Activated CD4-positive, alpha-beta memory T cell treated with anti-CD3 and anti-CD28 coated beads, Interleukin-2, amount 10 ng/mL, durations not matched to agents 7 days and 5 days (primary cell): ENCODE measurements at regions of chr3 and their contacts with region 1.

Region 1: DNA sequence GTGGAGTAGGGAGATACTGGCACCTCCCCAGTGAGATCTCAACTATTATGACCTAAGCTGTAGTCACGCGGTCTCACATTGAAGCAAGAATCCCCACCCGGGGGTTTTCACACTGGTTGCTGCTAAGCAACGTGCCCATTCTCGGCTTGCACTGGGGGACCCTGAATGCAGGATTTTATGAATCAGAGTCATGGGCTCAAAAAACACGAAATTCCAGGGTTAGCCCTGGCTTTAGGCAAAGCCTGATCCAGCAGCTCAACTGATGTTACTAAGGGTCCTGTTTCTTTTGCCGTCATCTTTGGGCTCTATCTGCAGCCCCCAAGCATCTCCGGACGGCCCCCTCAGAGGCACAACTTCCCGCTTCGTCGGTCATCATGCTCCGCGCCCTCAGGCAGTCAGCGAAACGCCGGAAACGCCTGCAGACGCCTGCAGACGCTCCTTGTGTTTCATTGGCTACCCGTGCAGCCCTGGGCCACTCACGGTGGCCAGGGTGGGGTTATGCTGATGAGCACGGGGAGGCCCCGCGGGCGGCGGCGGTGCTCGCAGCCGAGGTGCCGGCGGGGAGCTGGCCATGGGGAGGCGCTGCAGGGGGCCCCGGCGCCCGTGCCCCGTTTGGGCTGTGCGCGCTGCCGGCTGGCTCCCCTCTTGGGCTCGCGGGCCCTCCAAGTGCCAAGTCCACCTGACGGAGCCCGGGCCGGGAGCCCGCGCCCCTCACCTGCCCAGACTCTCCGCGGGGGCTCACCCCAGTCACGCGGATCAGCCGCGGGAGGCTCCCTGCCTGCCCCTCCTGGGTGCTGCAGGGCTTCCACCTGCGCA is 25.8 kb downstream of the EFCC1 start:
- DNase-seq: peak; percentile 95
- H3K4me3 Mint-ChIP-seq: peak overlapping the region; percentile 69
- H3K27ac Mint-ChIP-seq: peak overlapping the region; percentile 70
- H3K4me1 Mint-ChIP-seq: peaks cover 14% of the 10 kb centered on the region
- H3K27me3 Mint-ChIP-seq: peaks cover 6% of the 10 kb centered on the region

Region 2: DNA sequence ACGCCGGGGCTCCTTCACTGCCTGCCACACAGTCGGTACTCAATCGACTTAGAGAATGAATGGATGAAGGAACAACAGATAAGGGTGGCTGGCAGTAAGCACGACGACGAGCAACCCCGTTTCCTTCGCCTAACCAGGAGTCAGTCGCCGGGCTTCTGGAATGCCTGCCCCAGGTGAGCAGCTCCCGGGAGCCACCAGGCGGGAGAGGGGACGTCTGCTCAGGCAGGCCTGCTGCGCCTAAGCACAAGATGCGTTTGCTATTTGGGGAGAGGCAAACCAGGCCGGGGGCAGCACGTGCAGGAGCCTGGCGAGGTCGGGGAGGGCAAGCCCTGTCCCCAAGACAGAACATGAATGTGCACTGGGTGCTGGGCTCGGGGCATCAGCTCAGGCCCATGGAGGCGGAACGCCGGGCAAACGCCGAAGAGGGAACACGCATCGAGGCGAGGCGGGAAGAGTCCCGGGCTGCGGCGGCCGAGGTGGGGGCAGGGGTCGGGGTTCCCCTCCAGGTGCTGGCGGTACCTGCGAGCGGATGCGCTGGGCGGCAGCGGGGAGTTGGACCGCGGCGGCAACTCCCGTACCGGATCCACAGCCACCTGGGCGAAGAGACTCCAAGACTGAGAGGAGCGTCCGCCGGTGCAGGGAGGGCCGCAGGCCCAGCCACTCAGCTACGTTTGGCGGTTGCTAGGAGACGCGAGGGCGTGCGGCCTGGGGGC is 33.3 kb before region 1 on chr3 and contains the start of gene CFAP92:
- CTCF ChIA-PET with region 1: interaction called, 12 read pairs
- POLR2A ChIA-PET with region 1: interaction called, 9 read pairs
- DNase-seq: peak; percentile 94
- H3K4me3 Mint-ChIP-seq: peak within 1 kb of the TSS; percentile 32
- H3K27ac Mint-ChIP-seq: no peak within 1 kb of the TSS
- H3K4me1 Mint-ChIP-seq: peaks cover 14% of the 10 kb centered on the region
- H3K27me3 Mint-ChIP-seq: peaks cover 13% of the 10 kb centered on the region
- total RNA-seq, gene CFAP92: 0.15 TPM in 1 of 2 experiments, not detected in the other

Region 3: GRCh38 chr3:129052675-129053074 is 25.7 kb after region 1 on chr3:
- CTCF ChIA-PET with region 1: interaction called, 31 read pairs
- POLR2A ChIA-PET with region 1: no interaction called
- DNase-seq: no peak
- H3K4me3 Mint-ChIP-seq: no peak overlapping the region
- H3K27ac Mint-ChIP-seq: peak overlapping the region; percentile 28
- H3K4me1 Mint-ChIP-seq: peaks cover 7% of the 10 kb centered on the region
- H3K27me3 Mint-ChIP-seq: peaks cover 18% of the 10 kb centered on the region

Region 4: DNA sequence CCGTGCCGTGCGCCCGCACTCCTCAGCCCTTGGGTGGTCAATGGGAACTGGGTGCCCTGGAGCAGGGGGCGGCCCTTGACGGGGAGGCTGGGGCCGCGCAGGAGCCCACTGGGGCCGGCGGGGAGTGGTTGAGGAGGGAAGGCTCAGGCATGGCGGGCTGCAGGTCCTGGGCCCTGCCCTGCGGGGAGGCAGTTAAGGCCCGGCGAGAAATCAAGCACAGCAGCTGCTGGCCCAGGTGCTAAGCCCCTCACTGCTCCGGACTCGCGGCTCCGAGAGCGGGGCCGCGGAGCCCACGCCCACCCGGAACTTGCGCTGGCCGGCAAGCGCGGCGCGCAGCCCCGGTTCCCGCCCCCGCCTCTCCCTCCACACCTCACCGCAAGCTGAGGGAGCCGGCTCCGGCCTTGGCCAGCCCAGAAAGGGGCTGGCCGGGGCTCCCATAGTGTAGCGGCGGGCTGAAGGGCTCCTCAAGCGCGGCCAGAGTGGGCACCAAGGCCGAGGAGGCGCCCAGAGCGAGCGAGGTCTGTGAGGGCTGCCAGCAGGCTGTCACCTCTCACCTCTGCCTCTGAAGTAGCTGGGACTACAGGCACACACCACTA is 41.5 kb after region 1 on chr3:
- CTCF ChIA-PET with region 1: interaction called, 15 read pairs
- POLR2A ChIA-PET with region 1: no interaction called
- DNase-seq: no peak
- H3K4me3 Mint-ChIP-seq: no peak overlapping the region
- H3K27ac Mint-ChIP-seq: no peak overlapping the region
- H3K4me1 Mint-ChIP-seq: peaks cover 8% of the 10 kb centered on the region
- H3K27me3 Mint-ChIP-seq: peaks cover 18% of the 10 kb centered on the region